Activated B cell treated with CpG ODN at 0.5 μM for 24 hours (primary cell): ENCODE measurements at regions of chr6 and their contacts with region 1.

Region 1: DNA sequence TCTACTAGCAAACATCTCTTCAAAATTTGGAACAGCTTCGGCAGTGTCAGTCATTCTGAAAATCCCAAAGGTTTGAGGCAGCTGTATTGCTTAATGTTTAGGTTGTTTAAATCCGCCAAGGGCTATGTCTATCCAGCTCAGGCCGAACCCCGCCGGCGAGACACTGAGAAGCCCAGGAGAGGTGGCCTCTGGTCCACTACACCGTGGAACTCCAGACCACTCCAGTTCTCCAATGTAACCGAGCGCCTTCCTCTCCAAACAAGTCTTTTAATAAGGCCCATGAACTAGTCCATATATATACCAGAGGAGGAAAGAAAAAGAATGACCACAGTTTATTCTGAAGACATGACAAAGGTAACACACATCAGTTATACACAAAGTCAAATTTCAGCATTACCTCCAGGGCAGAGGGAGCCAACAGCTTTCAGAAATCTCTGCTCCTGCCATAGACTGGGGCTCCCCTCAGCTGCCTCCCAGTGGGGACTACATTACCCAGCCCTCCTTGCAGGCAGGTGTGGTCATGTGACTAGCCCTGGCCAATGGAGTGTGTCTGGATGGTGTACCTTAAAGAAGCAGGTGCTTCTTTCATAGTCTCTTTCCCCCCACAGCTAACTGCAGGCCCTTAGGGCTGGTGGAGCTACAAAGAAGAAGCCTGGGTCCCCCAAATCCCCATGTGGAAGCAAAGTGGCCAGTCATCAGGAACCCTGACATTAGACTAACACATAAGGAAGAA is at the start of gene RAMACL:
- DNase-seq: no peak
- ATAC-seq: peak; percentile 60
- H3K4me3 Mint-ChIP-seq: no peak within 1 kb of the TSS
- H3K27ac Mint-ChIP-seq: peak within 1 kb of the TSS; percentile 71
- H3K4me1 Mint-ChIP-seq: peaks cover 42% of the 10 kb centered on the region
- H3K27me3 Mint-ChIP-seq: no peaks in the 10 kb centered on the region
- CTCF ChIP-seq: no peak
- total RNA-seq, gene RAMACL: 1.8 and 2.3 TPM in 2 replicates

Region 2: GRCh38 chr6:166382933-166383801 is 203.4 kb before region 1 on chr6 and contains the start of gene MPC1:
- CTCF ChIA-PET with region 1: no interaction called
- POLR2A ChIA-PET with region 1: no interaction called
- intact Hi-C with region 1: loop called (anchors 2 kb)
- DNase-seq: peak; percentile 96
- ATAC-seq: peak; percentile 94
- H3K4me3 Mint-ChIP-seq: peak within 1 kb of the TSS; percentile 92
- H3K27ac Mint-ChIP-seq: peak within 1 kb of the TSS; percentile 76
- H3K4me1 Mint-ChIP-seq: peaks cover 15% of the 10 kb centered on the region
- H3K27me3 Mint-ChIP-seq: no peaks in the 10 kb centered on the region
- CTCF ChIP-seq: no peak
- total RNA-seq, gene MPC1: 16.7 and 17.3 TPM in 2 replicates

Region 3: DNA sequence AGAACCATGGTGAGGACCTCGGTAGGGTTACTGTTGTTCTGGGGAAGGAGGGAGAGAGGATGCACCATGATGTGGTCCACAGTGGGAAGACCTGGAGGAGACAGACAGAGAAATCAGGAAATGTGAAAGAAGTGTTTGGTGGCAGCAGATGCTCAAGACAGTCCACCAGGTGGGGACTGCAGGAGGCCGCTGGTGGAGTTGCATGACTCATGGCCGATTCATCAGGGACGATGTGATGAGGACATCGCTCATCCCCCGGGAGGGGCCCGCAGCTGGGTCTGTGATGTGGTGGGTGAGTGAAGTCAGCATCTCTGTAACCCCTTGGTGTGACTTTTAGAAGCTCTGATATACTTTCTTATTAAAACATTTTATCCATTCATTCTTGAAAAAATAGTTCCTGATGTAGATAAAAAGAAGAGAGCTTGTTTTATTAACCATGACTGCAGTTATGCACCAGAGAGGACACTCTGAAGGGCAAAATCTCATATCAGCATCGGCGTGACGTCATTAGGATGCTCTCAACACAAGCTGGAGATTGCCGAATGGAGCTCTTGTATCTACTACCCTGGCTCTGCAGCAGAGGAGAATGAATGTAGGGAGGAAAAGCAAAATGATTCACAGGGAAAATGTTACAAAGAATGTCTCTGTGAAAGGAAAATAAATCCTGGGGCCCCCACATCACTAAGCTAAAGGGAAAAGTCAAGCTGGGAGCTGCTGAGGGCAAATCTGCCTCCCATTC is 71.3 kb before region 1 on chr6:
- CTCF ChIA-PET with region 1: interaction called, 3 read pairs
- POLR2A ChIA-PET with region 1: interaction called, 4 read pairs
- intact Hi-C with region 1: loop called (anchors 1 kb)
- DNase-seq: peak; percentile 33
- ATAC-seq: peak; percentile 78
- H3K4me3 Mint-ChIP-seq: no peak overlapping the region
- H3K27ac Mint-ChIP-seq: no peak overlapping the region
- H3K4me1 Mint-ChIP-seq: peaks cover 20% of the 10 kb centered on the region
- H3K27me3 Mint-ChIP-seq: no peaks in the 10 kb centered on the region
- CTCF ChIP-seq: no peak

Region 4: DNA sequence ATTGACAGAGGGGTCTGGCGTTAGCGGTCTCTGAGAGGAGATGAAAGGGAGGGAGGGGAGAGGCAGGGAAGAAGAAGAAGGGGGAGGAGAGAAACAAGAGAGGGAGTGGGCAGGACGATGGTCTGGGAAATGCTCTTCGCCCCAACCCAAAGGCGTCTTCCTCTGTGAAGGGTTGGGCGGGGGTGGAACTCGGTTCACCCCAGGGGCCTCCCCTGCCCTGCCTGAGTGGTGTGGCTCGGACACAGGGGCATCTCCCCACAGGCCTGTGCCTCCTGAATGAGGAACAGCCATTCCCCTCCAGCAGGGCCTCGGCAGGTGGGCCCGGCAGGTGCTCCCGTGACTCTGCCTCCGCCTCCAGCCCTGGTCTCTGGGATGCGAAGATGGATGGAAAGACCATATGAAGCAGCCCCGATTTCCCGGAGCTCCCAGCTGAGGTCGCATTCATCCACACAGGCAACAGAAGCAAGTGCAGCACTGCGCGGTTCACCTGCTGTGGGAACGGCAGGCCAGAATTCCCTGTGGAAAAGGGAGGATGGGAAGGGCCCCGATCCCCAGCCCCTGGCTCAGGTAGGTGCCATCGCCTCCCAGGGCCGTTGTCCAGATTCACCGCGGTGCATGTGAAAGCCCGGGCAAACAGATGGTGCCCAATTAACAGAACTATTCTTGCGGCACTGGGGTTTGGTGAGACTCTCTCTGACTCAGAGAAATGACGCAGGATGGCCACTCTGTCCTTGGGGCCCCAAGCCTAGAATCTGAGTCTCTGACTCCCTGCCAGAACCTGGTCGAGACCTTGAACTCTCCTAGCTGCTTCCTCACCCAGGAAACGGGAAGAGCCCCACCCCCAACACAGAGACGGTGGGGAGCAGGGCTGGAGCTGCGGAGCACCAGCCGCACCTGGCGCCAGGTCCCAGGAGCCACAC is 69.9 kb after region 1 on chr6:
- CTCF ChIA-PET with region 1: no interaction called
- POLR2A ChIA-PET with region 1: interaction called, 4 read pairs
- intact Hi-C with region 1: loop called (anchors 2 kb)
- DNase-seq: no peak
- ATAC-seq: peak; percentile 57
- H3K4me3 Mint-ChIP-seq: no peak overlapping the region
- H3K27ac Mint-ChIP-seq: no peak overlapping the region
- H3K4me1 Mint-ChIP-seq: peaks cover 2% of the 10 kb centered on the region
- H3K27me3 Mint-ChIP-seq: peaks cover 26% of the 10 kb centered on the region
- CTCF ChIP-seq: no peak

Region 5: GRCh38 chr6:167350731-167351655 is 764.4 kb after region 1 on chr6:
- CTCF ChIA-PET with region 1: no interaction called
- POLR2A ChIA-PET with region 1: interaction called, 4 read pairs
- intact Hi-C with region 1: loop called (anchors 2 kb)
- DNase-seq: peak; percentile 77
- ATAC-seq: peak; percentile 77
- H3K4me3 Mint-ChIP-seq: peak overlapping the region; percentile 89
- H3K27ac Mint-ChIP-seq: peak overlapping the region; percentile 74
- H3K4me1 Mint-ChIP-seq: peaks cover 24% of the 10 kb centered on the region
- H3K27me3 Mint-ChIP-seq: peaks cover 21% of the 10 kb centered on the region
- CTCF ChIP-seq: peak; percentile 43